IMR-90 (cell line): ENCODE measurements at regions of chr2 and their contacts with region 1.

Region 1: DNA sequence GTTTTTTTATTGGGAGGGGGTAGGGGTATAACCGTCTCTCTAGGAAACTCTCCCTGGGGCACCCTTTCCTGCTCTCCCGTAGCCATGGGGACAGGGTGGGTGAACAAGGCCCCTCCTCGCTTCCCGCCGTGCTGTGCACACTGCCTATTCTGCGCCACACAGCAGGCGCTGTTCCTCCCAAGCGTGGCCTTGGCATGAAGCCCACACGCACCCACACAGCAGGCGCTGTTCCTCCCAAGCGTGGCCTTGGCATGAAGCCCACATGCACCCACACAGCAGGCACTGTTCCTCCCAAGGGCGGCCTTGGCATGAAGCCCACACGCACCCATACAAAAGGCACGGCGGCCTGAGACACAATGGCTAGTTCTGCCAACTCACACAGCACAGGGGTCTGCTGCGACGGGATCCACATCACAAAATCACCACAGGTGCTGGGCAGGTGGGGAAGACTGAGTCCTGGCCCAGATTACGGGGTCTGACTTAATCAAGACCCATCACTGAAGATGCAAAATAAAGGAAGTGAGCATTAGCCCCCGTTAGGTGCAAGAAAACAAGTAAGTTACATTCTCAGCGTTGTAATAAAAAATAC is 46.6 kb upstream of the TPO start:
- DNase-seq: no peak
- ATAC-seq: no peak
- H3K4me3 ChIP-seq: no peak overlapping the region
- H3K27ac ChIP-seq: no peak overlapping the region
- H3K4me1 ChIP-seq: no peaks in the 10 kb centered on the region
- H3K27me3 ChIP-seq: no peaks in the 10 kb centered on the region
- CTCF ChIP-seq: no peak
- POLR2A ChIP-seq: no peak
- RAD21 ChIP-seq: no peak

Region 2: DNA sequence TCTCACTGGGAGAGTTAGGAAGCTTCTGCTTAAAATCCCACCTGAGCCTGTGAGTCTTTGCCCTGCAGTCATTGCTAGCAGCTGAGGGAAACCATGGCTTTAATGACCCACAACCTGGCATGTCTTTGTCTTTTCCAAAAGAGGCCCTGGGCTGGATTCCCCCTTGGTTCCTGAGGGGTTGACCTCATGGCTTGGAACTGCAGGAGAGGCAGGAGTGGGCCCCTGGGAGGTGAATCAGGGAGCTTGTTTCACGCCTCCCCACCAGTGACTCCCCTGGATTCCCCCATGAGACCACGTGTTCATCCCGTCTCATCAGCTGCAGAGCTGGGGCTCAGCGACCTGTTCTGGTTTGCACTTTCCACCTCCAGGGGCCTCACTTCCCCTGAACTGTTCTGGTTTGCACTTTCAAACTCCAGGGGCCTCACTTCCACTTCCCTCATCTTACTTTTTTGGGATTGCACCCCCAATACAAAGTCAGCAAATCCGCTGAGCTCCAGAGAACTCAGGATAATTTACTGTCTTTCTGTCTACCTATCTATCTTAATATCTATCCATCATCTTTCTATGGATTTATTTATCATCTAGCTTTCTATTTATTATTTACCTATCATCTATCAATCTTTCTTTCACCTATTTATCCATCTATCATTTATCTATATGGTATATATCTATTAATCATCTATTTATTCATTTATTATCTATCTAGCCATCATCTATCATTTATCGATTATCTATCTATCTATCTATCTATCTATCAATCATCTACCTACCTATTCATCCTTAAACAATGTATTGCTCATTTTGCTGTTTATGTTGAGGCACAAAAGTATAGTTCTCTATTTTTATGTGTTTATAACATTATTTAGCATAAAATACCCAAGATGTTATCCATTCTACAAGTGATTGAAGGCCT is 630.7 kb before region 1 on chr2:
- CTCF ChIA-PET with region 1: no interaction called
- POLR2A ChIA-PET with region 1: no interaction called
- dilution Hi-C with region 1: no loop called
- in situ Hi-C with region 1: no loop called
- intact Hi-C with region 1: no loop called
- DNase-seq: no peak
- ATAC-seq: no peak
- H3K4me3 ChIP-seq: no peak overlapping the region
- H3K27ac ChIP-seq: no peak overlapping the region
- H3K4me1 ChIP-seq: no peaks in the 10 kb centered on the region
- H3K27me3 ChIP-seq: peaks cover 1% of the 10 kb centered on the region; the same call in 1 of the 2 replicates
- CTCF ChIP-seq: no peak
- POLR2A ChIP-seq: no peak
- RAD21 ChIP-seq: no peak

Region 3: GRCh38 chr2:989781-990467 is 376.7 kb before region 1 on chr2:
- CTCF ChIA-PET with region 1: no interaction called
- POLR2A ChIA-PET with region 1: no interaction called
- dilution Hi-C with region 1: no loop called
- in situ Hi-C with region 1: no loop called
- intact Hi-C with region 1: loop called (anchors 5 kb)
- DNase-seq: no peak
- ATAC-seq: no peak
- H3K4me3 ChIP-seq: no peak overlapping the region
- H3K27ac ChIP-seq: no peak overlapping the region
- H3K4me1 ChIP-seq: no peaks in the 10 kb centered on the region
- H3K27me3 ChIP-seq: no peaks in the 10 kb centered on the region
- CTCF ChIP-seq: no peak
- POLR2A ChIP-seq: no peak
- RAD21 ChIP-seq: no peak